ENCODE measurements at regions of chr12 and their contacts with region 1.

Region 1: DNA sequence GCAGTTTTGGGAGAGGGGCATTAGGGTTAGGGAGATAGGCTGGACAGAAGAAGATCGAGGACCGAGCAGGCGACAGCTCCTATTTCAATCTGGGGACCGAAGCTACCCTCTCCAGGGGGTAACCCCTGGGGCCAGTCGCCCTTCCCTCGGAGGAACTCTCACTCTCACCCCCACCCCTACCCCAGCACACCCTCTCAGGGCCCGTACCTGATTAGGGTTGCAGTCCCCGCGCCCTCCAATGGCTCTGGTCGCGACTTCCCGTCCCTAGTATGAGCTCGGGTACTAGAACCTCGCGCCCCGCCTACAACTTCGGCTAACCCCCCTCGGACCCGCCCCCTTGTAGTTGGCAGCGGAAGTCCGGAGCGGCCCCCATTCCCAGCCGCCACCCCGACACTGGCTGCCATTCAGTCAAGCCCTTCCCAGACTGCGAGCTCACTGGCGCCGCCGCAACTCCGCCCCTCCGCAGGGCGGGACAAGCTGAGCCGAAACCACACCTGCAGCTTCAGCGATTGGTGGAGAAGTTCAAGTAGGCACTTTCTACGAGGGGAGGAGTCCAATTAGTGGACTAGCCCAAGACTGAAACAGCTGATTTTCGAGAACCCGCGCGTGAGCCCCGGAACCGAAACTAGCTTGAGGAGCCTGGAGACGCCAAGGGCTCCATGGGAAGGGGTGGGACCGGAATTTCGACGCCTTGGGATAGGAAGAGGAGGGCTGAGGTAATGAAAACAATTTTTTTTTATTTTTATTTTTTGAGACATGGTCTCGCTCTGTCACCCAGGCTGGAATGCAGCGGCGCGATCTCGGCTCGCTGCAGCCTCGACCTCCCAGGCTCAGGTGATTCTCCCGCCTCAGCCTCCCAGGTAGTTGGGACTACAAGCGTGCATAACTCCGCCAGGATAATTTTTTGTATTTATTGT is at the start of gene STAT2:
- DNase-seq: peak; percentile 100
- ATAC-seq: peak; percentile 98
- H3K4me3 Mint-ChIP-seq: peak within 1 kb of the TSS; percentile 90
- H3K27ac Mint-ChIP-seq: peak within 1 kb of the TSS; percentile 99
- H3K4me1 Mint-ChIP-seq: peaks cover 13% of the 10 kb centered on the region
- H3K27me3 Mint-ChIP-seq: peaks cover 9% of the 10 kb centered on the region; the same call in 1 of the 2 replicates
- CTCF ChIP-seq: no peak
- total RNA-seq, gene STAT2: 53.2 to 54.5 TPM (median 54.5 TPM) in 3 replicates

Region 2: DNA sequence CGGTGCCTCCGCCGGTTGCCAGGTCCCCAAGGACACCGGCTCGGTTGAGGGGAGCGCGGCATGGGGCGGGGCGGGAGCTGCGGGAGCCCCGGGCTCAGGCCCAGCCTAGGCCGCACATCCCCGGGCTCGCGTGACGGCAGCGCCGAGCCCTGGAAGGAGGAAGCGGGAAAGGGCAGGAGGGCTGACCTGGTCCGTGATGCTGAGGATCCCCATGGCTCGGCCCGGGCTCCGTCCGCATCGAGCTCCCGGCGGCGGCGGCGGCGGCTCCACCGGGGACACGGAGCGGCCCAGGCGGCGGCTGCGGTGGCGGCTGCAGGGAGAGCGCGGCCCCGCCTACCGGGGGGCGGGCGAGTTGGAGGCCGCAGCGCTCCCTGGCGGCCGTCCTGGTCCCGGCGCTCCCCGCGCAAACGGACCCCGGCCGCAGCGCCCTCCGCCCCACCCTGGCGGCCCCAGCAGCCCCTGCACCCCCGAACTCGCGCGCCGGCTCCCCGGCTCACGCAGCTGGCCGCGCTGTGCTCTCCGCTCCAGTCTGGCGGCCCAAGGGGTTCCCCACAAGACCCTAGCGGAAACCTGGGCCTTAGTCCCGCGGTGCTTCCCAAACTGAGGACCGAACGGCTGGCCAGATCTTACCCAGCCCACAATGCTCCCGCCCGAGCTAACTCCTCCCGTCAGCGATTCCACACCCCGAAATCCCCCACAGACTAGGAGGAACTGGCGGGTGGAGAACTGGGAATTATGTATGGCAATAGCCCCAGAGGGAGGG is 101.9 kb before region 1 on chr12 and contains the start of gene ANKRD52:
- CTCF ChIA-PET with region 1: interaction called, 10 read pairs
- POLR2A ChIA-PET with region 1: no interaction called
- DNase-seq: peak; percentile 76
- ATAC-seq: peak; percentile 74
- H3K4me3 Mint-ChIP-seq: peak within 1 kb of the TSS; percentile 95
- H3K27ac Mint-ChIP-seq: peak within 1 kb of the TSS; percentile 92
- H3K4me1 Mint-ChIP-seq: peaks cover 18% of the 10 kb centered on the region
- H3K27me3 Mint-ChIP-seq: 0 out of 2 replicates have a peak, but pooled peaks cover 4% of the 10 kb centered on the region
- CTCF ChIP-seq: peak; percentile 61
- total RNA-seq, gene ANKRD52: 33.0 to 41.2 TPM (median 38.6 TPM) in 3 replicates

Region 3: GRCh38 chr12:56286044-56286830 is 73.9 kb before region 1 on chr12:
- CTCF ChIA-PET with region 1: no interaction called
- POLR2A ChIA-PET with region 1: no interaction called
- DNase-seq: no peak
- ATAC-seq: no peak
- H3K4me3 Mint-ChIP-seq: no peak overlapping the region
- H3K27ac Mint-ChIP-seq: peak overlapping the region; percentile 84
- H3K4me1 Mint-ChIP-seq: peaks cover 9% of the 10 kb centered on the region
- H3K27me3 Mint-ChIP-seq: no peaks in the 10 kb centered on the region
- CTCF ChIP-seq: no peak

Region 4: GRCh38 chr12:56315622-56316473 is 44.3 kb before region 1 on chr12 and contains the start of gene CNPY2:
- CTCF ChIA-PET with region 1: interaction called, 22 read pairs
- POLR2A ChIA-PET with region 1: interaction called, 24 read pairs
- DNase-seq: peak; percentile 97
- ATAC-seq: peak; percentile 94
- H3K4me3 Mint-ChIP-seq: peak within 1 kb of the TSS; percentile 98
- H3K27ac Mint-ChIP-seq: peak within 1 kb of the TSS; percentile 99
- H3K4me1 Mint-ChIP-seq: peaks cover 8% of the 10 kb centered on the region
- H3K27me3 Mint-ChIP-seq: no peaks in the 10 kb centered on the region
- CTCF ChIP-seq: no peak
- total RNA-seq, gene CNPY2: 171 to 193 TPM (median 192 TPM) in 3 replicates

Region 5: GRCh38 chr12:56338308-56339157 is 21.6 kb before region 1 on chr12 and contains the start of gene IL23A:
- CTCF ChIA-PET with region 1: interaction called, 8 read pairs
- POLR2A ChIA-PET with region 1: interaction called, 24 read pairs
- DNase-seq: peak; percentile 68
- ATAC-seq: peak; percentile 46
- H3K4me3 Mint-ChIP-seq: peak within 1 kb of the TSS; percentile 62
- H3K27ac Mint-ChIP-seq: peak within 1 kb of the TSS; percentile 99
- H3K4me1 Mint-ChIP-seq: peaks cover 34% of the 10 kb centered on the region
- H3K27me3 Mint-ChIP-seq: no peaks in the 10 kb centered on the region
- CTCF ChIP-seq: no peak
- total RNA-seq, gene IL23A: 2.9 to 3.0 TPM (median 2.9 TPM) in 3 replicates

Region 6: DNA sequence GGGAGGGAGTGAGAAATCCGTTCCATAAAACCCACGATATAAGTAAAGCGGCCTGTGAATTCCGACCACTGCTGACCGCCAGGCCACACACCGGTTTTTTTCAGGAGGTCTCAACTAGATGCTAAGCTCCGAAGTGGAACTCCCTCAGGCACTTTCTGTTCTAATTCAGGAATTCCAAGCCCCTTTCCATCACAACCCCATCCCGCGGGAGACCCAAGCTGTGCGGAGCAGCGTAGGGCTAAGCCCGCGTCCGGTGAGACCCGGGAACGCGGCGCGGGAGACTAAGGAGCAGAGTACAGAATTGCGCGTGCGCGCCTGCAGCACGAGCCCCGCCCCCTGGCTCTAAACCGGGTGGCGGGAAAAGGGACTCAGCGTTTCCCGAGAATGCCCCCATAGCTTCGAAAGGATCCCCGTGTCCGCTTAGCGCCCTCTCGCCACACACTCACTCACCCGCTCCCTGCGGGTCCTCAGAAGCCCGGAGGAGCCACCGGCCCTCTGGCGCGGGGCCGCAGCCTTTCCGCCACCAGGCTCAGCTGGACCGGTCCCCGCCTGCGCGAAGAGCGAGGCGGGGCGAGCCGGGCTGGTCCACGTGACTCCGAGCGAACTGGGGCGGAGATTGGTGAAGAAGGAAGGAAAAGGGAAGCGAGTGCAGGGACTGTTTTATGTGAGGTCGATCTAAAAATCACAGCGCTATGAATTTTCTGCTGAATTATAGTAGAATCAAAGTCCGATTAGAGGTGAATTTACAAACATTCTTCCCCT is 88.9 kb after region 1 on chr12 and contains the start of gene TIMELESS:
- CTCF ChIA-PET with region 1: interaction called, 17 read pairs
- POLR2A ChIA-PET with region 1: interaction called, 19 read pairs
- DNase-seq: peak; percentile 88
- ATAC-seq: peak; percentile 92
- H3K4me3 Mint-ChIP-seq: peak within 1 kb of the TSS; percentile 82
- H3K27ac Mint-ChIP-seq: peak within 1 kb of the TSS; percentile 97
- H3K4me1 Mint-ChIP-seq: peaks cover 41% of the 10 kb centered on the region
- H3K27me3 Mint-ChIP-seq: peaks cover 5% of the 10 kb centered on the region
- CTCF ChIP-seq: no peak
- total RNA-seq, gene TIMELESS: 60.9 to 67.1 TPM (median 64.9 TPM) in 3 replicates

Region 7: GRCh38 chr12:56461235-56462159 is 101.4 kb after region 1 on chr12:
- CTCF ChIA-PET with region 1: interaction called, 55 read pairs
- POLR2A ChIA-PET with region 1: interaction called, 4 read pairs
- DNase-seq: no peak
- ATAC-seq: no peak
- H3K4me3 Mint-ChIP-seq: no peak overlapping the region
- H3K27ac Mint-ChIP-seq: no peak overlapping the region
- H3K4me1 Mint-ChIP-seq: peaks cover 17% of the 10 kb centered on the region
- H3K27me3 Mint-ChIP-seq: peaks cover 5% of the 10 kb centered on the region
- CTCF ChIP-seq: no peak

Measured in WTC11 (cell line).